ENCODE measurements at regions of chr6 and their contacts with region 1.

Region 1: GRCh38 chr6:2999618-3000557 is at the start of gene NQO2:
- DNase-seq: peak; percentile 78 to 94 (median 88)
- H3K4me3 ChIP-seq: peak within 1 kb of the TSS; percentile 62 to 100 (median 89)
- H3K27ac ChIP-seq: peak within 1 kb of the TSS; percentile 49 to 96 (median 86)
- H3K27me3 ChIP-seq: no peaks in the 10 kb centered on the region
- CTCF ChIP-seq: peak in 18 of 56 donors; percentile 5 to 39 (median 18)
- total RNA-seq, gene NQO2: 27.5 to 103 (median 66.8) TPM

Region 2: DNA sequence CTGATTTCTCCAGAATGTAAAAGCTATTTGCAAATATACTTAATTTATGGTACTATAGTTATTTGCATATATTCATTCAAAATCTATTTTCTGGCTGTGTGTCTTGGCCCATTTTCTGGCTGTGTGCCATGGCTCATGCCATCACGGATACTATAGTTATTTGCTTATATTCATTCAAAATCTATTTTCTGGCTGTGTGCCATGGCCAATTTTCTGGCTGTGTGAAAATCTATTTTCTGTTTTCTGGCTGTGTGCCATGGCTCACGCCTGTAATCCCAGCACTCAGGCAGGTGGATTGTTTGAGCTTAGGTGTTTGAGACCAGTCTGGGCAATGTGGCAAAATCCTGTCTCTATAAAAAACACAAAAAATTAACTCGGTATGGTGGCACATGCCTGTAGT is 39.5 kb after region 1 on chr6:
- intact Hi-C with region 1: no loop called
- DNase-seq: no peak
- H3K4me3 ChIP-seq: no peak overlapping the region
- H3K27ac ChIP-seq: no peak overlapping the region
- H3K27me3 ChIP-seq: peaks cover 0 to 2% (median 0%) of the 10 kb centered on the region in 45 donors
- CTCF ChIP-seq: no peak

Region 3: GRCh38 chr6:3052481-3053230 is 52.8 kb after region 1 on chr6:
- intact Hi-C with region 1: loop called (anchors 1 to 2 kb)
- DNase-seq: no peak
- H3K4me3 ChIP-seq: peak overlapping the region in 9 of 59 donors; percentile 50 to 64 (median 63)
- H3K27ac ChIP-seq: peak overlapping the region in 1 of 59 donors; percentile 45
- H3K27me3 ChIP-seq: no peaks in the 10 kb centered on the region
- CTCF ChIP-seq: no peak

Region 4: GRCh38 chr6:3075522-3076113 is 75.7 kb after region 1 on chr6:
- intact Hi-C with region 1: no loop called
- DNase-seq: no peak
- H3K4me3 ChIP-seq: no peak overlapping the region
- H3K27ac ChIP-seq: no peak overlapping the region
- H3K27me3 ChIP-seq: no peaks in the 10 kb centered on the region
- CTCF ChIP-seq: no peak

Region 5: DNA sequence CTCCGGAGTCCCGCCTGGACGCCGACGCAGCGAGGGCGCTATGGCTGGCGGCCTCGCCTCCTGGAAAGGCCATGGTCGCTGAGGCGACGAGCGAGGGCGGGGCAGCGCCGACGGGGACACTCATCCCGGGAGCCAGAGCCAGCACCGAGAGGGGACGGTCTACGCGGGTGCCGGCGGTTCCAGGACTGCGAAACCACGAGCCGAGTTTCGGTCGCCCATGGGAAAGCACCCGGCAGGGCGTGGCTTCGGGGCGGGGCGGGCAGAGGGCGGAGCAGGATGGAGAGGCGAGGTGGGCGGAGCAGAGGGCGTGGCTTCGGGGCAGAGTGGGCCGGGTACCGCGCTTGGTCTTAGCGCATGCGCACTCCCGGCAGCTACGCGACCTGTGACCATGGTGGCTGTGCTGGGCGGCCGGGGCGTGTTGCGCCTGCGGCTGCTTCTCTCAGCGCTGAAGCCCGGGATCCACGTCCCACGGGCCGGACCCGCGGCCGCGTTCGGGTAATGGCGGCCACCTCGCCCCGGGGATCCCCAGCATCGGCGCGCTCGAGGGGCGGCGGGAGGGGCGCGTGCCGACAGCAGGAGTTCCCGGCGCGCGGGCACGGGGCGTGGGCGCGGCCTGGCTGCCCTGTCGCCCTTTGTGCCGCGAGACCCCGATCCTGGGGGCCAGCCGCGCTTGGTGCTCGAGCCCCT is 118.6 kb after region 1 on chr6 and contains the start of gene BPHL:
- intact Hi-C with region 1: loop called in 1 of 2 experiments (anchors 5 kb)
- DNase-seq: peak; percentile 93 to 99 (median 97)
- H3K4me3 ChIP-seq: peak within 1 kb of the TSS; percentile 59 to 99 (median 89)
- H3K27ac ChIP-seq: peak within 1 kb of the TSS in 58 of 59 donors; percentile 37 to 95 (median 88)
- H3K27me3 ChIP-seq: no peaks in the 10 kb centered on the region
- CTCF ChIP-seq: peak in 36 of 56 donors; percentile 7 to 62 (median 28)
- total RNA-seq, gene BPHL: 13.6 to 41.1 (median 26.1) TPM

Measured in dorsolateral prefrontal cortex (tissue), 120 donors.